ENCODE measurements at regions of chr7 and their contacts with region 1.

Region 1: DNA sequence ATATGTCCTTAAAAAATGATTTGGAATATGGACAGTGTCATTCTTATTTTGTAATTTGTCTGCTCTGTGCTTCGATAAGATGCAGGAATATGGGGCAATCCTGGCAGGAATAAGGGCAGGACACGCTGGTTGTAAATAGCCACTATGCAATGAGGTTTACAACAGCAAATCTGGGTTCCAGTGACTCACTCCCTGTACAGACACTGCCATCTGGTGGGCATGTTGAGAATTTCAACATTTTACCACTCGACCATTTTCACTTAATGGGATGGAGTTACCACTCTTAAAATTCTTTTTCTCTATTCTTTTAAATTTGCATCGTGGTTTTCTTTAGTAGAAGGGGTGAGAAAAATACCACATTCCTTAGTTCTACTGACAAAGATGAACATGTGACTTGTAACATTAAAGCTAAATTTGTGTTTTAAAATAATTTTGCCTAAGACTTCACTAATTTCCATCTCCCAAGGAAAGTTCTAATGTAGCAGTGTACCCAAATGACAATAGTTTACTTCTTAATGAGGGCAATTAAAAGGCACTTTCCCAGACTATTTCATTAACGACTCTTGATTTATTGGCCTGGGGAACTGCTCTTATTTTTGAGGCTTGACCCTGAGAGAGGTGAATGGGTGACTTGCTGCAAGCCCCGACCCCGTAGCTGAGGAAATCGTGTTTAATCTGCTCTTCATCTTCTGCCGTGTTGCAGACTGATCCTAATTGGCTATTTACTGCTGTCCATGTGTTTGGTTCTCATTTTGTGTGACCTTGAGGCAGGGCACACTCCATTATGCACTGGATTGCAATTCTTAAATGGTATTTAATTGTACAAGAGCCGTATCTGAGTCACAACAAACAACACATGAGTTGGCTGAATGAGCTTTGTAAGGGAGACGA is 173.6 kb upstream of the IMMP2L start:
- DNase-seq: peak in 1 of 2 donors; percentile 65
- H3K4me3 ChIP-seq: no peak overlapping the region
- H3K27ac ChIP-seq: no peak overlapping the region
- H3K4me1 ChIP-seq: peaks cover 0 to 7% (median 0%) of the 10 kb centered on the region in 4 donors
- H3K27me3 ChIP-seq: no peaks in the 10 kb centered on the region
- CTCF ChIP-seq: peak; percentile 79 to 86

Region 2: GRCh38 chr7:111098011-111098925 is 637.6 kb before region 1 on chr7:
- intact Hi-C with region 1: loop called (anchors 10 kb)
- DNase-seq: peak in 1 of 2 donors; percentile 59
- H3K4me3 ChIP-seq: no peak overlapping the region
- H3K27ac ChIP-seq: no peak overlapping the region
- H3K4me1 ChIP-seq: peaks cover 0 to 16% (median 0%) of the 10 kb centered on the region in 4 donors
- H3K27me3 ChIP-seq: no peaks in the 10 kb centered on the region
- CTCF ChIP-seq: peak; percentile 44 to 63

Measured in tibial artery (tissue), 4 donors.